A549 (cell line): ENCODE measurements at regions of chr11 and their contacts with region 1.

Region 1: DNA sequence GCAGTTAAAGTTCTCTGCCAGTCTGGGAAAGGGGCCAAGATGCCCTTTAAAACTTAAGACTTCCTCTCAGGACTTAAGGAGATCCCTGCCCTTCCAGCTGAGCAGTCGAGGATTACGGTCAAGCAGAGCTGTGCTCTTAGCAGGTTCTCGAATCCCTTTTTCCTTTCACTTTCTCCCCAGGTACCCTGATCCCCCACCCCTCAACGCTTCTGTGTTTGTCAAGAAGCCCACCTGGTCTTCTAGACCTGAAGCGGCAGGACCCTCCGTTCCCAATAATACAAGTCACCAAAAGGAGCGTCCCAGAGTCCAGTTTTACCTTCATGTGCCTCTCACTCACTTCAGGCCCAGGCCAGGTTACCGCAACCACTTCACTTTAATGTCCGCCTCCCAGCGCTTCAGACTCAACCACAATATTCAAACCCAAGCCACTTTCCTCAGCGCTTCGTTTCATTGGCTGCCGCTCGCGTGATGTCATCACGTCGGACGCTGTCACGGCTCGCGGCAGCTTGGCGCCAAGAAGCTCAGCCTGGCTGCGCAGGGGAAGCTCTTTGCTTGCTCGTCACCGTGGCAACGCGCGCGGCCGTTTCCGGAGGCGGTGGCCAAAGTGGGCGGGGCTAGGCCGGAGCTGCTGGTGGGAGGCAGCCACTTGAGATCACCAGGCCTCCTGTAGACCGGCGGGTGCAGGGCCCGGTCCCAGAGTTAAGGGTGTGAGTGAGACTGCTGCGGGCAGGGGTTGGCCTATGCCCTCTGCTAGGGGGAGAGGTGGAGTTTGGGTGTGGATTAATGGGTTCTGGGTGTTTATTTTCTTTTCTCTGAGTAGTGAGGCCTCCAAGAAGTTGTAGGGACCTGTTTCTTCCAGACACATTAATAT is at the starts of genes KIF18A and METTL15:
- DNase-seq: peak; percentile 70 to 100
- ATAC-seq: peak; percentile 94 to 96
- H3K4me3 ChIP-seq: peak within 1 kb of the TSS; percentile 59
- H3K27ac ChIP-seq: peak within 1 kb of the TSS; percentile 90 to 91
- H3K4me1 ChIP-seq: peaks cover 52% of the 10 kb centered on the region
- CTCF ChIP-seq: no peak
- EP300 ChIP-seq: no peak
- POLR2A ChIP-seq: peak; percentile 70
- RAD21 ChIP-seq: peak in 1 of 2 experiments; percentile 42; a peak in 1 of 5 replicates
- polyA plus RNA-seq, gene KIF18A: 29.8 and 47.2 TPM in 2 replicates
- polyA plus RNA-seq, gene METTL15: 21.9 and 23.5 TPM in 2 replicates

Region 2: GRCh38 chr11:27720277-27720830 is 387.6 kb before region 1 on chr11:
- CTCF ChIA-PET with region 1: interaction called, 4 read pairs
- POLR2A ChIA-PET with region 1: interaction called, 48 read pairs
- DNase-seq: peak; percentile 66 to 67
- ATAC-seq: peak in 1 of 2 experiments; percentile 53; a peak in 3 of 6 replicates
- H3K4me3 ChIP-seq: peak overlapping the region; percentile 88; the same call in 2 of the 3 replicates
- H3K27ac ChIP-seq: no peak overlapping the region
- H3K4me1 ChIP-seq: peaks cover 30% of the 10 kb centered on the region
- CTCF ChIP-seq: peak; percentile 16; the same call in 1 of the 3 replicates
- EP300 ChIP-seq: no peak
- POLR2A ChIP-seq: no peak
- RAD21 ChIP-seq: peak in 1 of 2 experiments; percentile 14; a peak in 2 of 5 replicates